ENCODE measurements at regions of chr19 and their contacts with region 1.

Region 1: DNA sequence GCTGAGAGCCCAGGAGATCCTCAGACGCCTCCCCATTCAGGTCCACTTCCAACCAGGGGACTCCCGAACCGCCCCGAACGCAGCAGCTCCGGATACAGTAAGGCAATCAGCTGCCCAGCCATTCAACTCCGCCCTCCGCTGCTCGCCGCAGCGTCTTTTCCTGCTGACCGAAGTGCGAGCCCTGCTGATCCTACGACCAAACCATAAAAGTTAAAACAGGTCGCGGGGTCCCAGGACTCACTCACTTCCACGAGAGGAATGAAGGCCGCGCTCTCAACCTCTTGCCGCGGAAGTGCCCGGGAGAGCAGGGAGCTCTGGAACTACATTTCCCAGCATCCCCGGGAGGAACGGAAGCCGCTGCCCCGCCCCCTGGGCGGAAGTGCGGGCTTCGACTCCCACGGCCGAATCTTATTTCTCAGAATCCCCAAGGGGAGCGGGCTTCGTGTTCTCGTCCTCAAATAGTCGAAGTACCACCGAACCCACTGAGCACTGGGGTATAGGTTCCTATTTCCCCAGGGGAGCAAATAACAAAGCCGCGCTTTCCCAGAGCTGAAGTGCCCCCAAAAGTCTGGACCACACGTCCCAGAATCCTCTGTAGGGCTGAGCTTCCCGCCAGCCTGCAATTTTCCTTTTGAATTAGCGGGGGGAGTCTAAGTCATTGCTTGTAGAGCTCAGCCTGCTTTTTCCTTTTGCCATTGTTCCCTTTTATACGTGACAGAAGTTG is at the start of gene ZNF45:
- DNase-seq: peak; percentile 81
- ATAC-seq: peak; percentile 96
- H3K4me3 Mint-ChIP-seq: peak within 1 kb of the TSS; percentile 93
- H3K27ac Mint-ChIP-seq: peak within 1 kb of the TSS; percentile 89
- H3K4me1 Mint-ChIP-seq: peaks cover 22% of the 10 kb centered on the region
- H3K27me3 Mint-ChIP-seq: peaks cover 4% of the 10 kb centered on the region
- CTCF ChIP-seq: no peak
- total RNA-seq, gene ZNF45: 17.2 and 19.1 TPM in 2 replicates

Region 2: DNA sequence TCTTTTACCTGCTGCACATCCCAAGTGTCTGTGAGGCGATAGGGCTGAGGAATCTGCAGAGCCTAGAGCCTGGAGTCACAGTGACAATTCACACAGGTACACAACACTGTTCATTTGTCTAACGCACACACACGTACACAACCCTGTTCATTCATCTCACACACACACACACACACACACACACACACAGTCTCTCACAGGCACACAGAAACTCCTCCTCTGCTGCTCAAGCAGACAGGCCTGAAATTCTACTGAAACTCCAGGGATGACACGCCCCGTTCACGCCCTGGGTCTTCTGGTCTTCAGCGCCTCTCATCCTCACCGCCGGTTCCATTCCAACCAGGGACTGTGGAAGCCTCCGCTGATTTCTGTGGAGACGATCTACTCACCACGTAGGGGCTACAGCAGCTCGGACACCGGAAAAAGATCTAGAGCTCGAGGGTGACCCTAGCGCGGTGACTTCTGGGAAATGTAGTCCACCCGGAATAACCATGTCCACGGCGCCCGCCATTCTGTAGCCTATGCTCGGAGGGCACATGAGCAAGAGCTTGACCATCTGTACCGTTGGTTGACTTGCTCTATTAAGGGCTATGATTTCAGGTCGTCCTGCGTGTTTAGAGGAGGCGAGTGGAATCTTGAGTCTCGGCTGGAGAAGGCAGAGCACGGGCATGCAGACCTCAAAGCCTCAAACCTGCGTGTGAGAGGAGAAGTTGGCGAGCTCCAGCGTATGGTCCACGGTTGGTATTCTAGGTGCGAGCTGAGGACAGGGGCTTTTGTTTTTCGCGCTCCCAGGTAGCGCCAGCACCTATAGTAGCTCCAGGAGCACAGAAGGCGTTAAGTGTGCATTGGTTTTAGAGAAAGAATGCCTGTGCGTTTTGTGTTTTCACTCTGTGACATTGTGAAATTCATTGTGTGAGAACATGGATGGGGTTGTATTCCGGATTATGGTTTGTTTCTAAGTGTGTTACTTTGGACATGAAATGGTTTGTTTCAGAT is 33.5 kb before region 1 on chr19:
- CTCF ChIA-PET with region 1: no interaction called
- POLR2A ChIA-PET with region 1: interaction called, 4 read pairs
- intact Hi-C with region 1: loop called (anchors 1 kb)
- DNase-seq: peak; percentile 62
- ATAC-seq: peak; percentile 96
- H3K4me3 Mint-ChIP-seq: peak overlapping the region; percentile 93
- H3K27ac Mint-ChIP-seq: peak overlapping the region; percentile 82
- H3K4me1 Mint-ChIP-seq: peaks cover 18% of the 10 kb centered on the region
- H3K27me3 Mint-ChIP-seq: no peaks in the 10 kb centered on the region
- CTCF ChIP-seq: no peak

Region 3: GRCh38 chr19:44071824-44072542 is 136.8 kb after region 1 on chr19 and contains the start of gene ZNF284:
- CTCF ChIA-PET with region 1: no interaction called
- POLR2A ChIA-PET with region 1: interaction called, 4 read pairs
- intact Hi-C with region 1: loop called (anchors 1 kb)
- DNase-seq: peak; percentile 67
- ATAC-seq: peak; percentile 100
- H3K4me3 Mint-ChIP-seq: peak within 1 kb of the TSS; percentile 94
- H3K27ac Mint-ChIP-seq: peak within 1 kb of the TSS; percentile 80
- H3K4me1 Mint-ChIP-seq: peaks cover 26% of the 10 kb centered on the region
- H3K27me3 Mint-ChIP-seq: peaks cover 1% of the 10 kb centered on the region
- CTCF ChIP-seq: no peak
- total RNA-seq, gene ZNF284: 2.1 and 2.3 TPM in 2 replicates

Region 4: GRCh38 chr19:44212250-44212865 is 277.2 kb after region 1 on chr19 and contains the start of gene ZNF227:
- CTCF ChIA-PET with region 1: no interaction called
- POLR2A ChIA-PET with region 1: interaction called, 4 read pairs
- intact Hi-C with region 1: loop called (anchors 10 kb)
- DNase-seq: peak; percentile 69
- ATAC-seq: peak; percentile 93
- H3K4me3 Mint-ChIP-seq: peak within 1 kb of the TSS; percentile 95
- H3K27ac Mint-ChIP-seq: peak within 1 kb of the TSS; percentile 89
- H3K4me1 Mint-ChIP-seq: peaks cover 20% of the 10 kb centered on the region
- H3K27me3 Mint-ChIP-seq: no peaks in the 10 kb centered on the region
- CTCF ChIP-seq: no peak
- total RNA-seq, gene ZNF227: 33.1 and 36.9 TPM in 2 replicates

Measured in activated B cell treated with CpG ODN at 0.5 μM for 24 hours (primary cell).